Activated CD4-positive, alpha-beta memory T cell treated with anti-CD3 and anti-CD28 coated beads, Interleukin-2, amount 10 ng/mL, durations not matched to agents 7 days and 5 days (primary cell): ENCODE measurements at regions of chr3 and their contacts with region 1.

Region 1: GRCh38 chr3:27467545-27467944 is 16.6 kb downstream of the SLC4A7 start:
- DNase-seq: no peak
- H3K4me3 Mint-ChIP-seq: no peak overlapping the region
- H3K27ac Mint-ChIP-seq: no peak overlapping the region
- H3K4me1 Mint-ChIP-seq: peaks cover 17% of the 10 kb centered on the region
- H3K27me3 Mint-ChIP-seq: no peaks in the 10 kb centered on the region

Region 2: GRCh38 chr3:27312044-27312668 is 155.4 kb before region 1 on chr3:
- CTCF ChIA-PET with region 1: interaction called, 10 read pairs
- POLR2A ChIA-PET with region 1: no interaction called
- DNase-seq: no peak
- H3K4me3 Mint-ChIP-seq: no peak overlapping the region
- H3K27ac Mint-ChIP-seq: no peak overlapping the region
- H3K4me1 Mint-ChIP-seq: no peaks in the 10 kb centered on the region
- H3K27me3 Mint-ChIP-seq: no peaks in the 10 kb centered on the region